Calu3 (cell line): ENCODE measurements at regions of chr1 and their contacts with region 1.

Region 1: DNA sequence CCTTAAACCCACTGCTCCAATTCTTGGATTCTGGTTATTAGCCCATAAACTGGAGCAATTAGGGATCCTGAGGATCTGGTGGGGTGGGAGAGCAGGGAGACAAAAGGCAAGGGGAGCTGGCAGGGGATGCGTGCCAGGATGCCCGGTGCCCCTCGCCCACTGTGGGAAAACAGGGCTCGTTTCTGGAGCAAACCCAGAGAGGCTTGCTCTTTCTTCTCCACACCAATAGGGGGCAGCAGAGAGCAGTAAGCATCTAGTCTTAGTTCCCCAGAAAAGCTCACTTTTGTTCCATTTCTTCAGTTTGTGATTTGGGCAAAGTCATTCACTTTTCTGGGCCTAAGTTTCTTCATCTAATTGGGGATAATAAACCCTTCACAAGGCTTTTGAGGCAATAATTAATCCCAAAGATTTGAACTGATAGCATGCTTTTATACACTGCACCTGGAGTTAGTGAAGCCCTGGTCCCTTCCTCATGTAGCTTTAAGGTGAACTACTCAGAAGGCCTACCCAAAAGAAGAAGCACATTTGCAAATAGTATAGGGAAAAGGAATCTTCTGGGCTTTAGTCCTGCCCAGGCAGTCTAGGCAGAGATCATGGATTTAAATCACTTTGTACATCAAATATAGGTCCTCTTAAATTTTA is 160.6 kb upstream of the USP24 start:
- DNase-seq: peak; percentile 61
- H3K4me3 Mint-ChIP-seq: no peak overlapping the region
- H3K27ac Mint-ChIP-seq: no peak overlapping the region
- H3K4me1 Mint-ChIP-seq: no peaks in the 10 kb centered on the region
- H3K27me3 Mint-ChIP-seq: peaks cover 3% of the 10 kb centered on the region
- CTCF ChIP-seq: peak; percentile 95

Region 2: GRCh38 chr1:55337801-55338447 is 37.8 kb before region 1 on chr1:
- CTCF ChIA-PET with region 1: no interaction called
- intact Hi-C with region 1: no loop called
- DNase-seq: peak; percentile 9
- H3K4me3 Mint-ChIP-seq: no peak overlapping the region
- H3K27ac Mint-ChIP-seq: no peak overlapping the region
- H3K4me1 Mint-ChIP-seq: no peaks in the 10 kb centered on the region
- H3K27me3 Mint-ChIP-seq: peaks cover 8% of the 10 kb centered on the region
- CTCF ChIP-seq: no peak

Region 3: DNA sequence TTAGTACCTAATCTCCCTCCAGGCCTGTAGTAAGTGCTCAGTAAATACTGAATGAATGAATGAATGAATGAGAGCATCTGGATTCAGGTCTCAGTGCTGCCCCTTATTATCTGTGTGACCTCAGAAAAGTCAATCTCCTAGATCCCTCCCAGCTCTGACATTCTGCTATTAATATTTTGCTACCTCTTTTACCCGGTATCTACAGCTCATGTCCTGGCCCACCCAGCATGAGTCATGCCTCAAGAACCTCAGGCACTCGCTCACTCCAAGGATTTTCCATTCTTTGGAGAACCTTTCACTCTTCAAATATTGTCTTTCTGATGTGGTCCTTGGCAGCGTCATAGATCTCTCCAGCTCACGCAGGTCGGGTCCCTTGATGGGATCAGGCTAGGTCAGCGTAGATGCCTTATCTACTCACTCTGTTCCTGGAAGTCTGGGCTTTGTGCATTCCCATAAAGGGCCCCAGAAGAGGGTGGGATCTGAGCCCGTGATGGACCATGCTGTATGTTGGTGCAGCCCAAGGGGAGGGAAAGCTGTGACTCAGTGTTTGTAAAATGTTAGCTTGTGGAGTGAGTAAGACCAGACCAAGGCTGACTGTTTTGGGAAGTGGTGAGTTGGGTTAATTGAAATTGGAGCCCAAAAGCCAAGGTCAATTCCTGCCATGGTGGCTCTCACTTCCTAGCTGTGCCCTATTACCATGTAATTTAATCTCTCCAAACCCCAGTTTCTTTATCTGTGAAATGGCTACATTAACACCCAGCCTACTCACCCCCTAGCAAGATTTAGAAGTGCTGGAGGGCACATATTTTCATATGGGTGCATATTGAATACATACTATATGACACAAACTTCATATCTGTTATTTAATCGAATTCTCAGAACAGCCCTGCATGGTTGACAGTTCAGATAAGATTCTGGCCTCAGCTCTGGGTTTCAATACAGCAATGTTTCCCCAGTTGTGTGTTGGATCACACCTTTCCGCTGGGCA is 53.5 kb after region 1 on chr1:
- CTCF ChIA-PET with region 1: interaction called, 3 read pairs
- intact Hi-C with region 1: loop called (anchors 5 kb)
- DNase-seq: peak; percentile 90
- H3K4me3 Mint-ChIP-seq: no peak overlapping the region
- H3K27ac Mint-ChIP-seq: peak overlapping the region; percentile 79
- H3K4me1 Mint-ChIP-seq: peaks cover 52% of the 10 kb centered on the region
- H3K27me3 Mint-ChIP-seq: no peaks in the 10 kb centered on the region
- CTCF ChIP-seq: no peak